ENCODE measurements at regions of chr9 and their contacts with region 1.

Region 1: GRCh38 chr9:38119699-38120236 is 50.7 kb upstream of the SHB start:
- DNase-seq: no peak
- ATAC-seq: no peak
- H3K4me3 ChIP-seq: no peak overlapping the region
- H3K27ac ChIP-seq: no peak overlapping the region
- H3K4me1 ChIP-seq: no peaks in the 10 kb centered on the region
- H3K27me3 ChIP-seq: peaks cover 0 to 1% (median 0%) of the 10 kb centered on the region in 3 donors
- CTCF ChIP-seq: no peak

Region 2: GRCh38 chr9:38235244-38235643 is 115.5 kb after region 1 on chr9:
- intact Hi-C with region 1: loop called in 1 of 2 experiments (anchors 5 kb)
- DNase-seq: no peak
- ATAC-seq: no peak
- H3K4me3 ChIP-seq: no peak overlapping the region
- H3K27ac ChIP-seq: no peak overlapping the region
- H3K4me1 ChIP-seq: no peaks in the 10 kb centered on the region
- H3K27me3 ChIP-seq: no peaks in the 10 kb centered on the region
- CTCF ChIP-seq: no peak